ENCODE measurements at regions of chr12 and their contacts with region 1.

Region 1: GRCh38 chr12:53451661-53452158 is at the start of gene PCBP2:
- DNase-seq: peak; percentile 97
- H3K4me3 Mint-ChIP-seq: peak within 1 kb of the TSS; percentile 97
- H3K27ac Mint-ChIP-seq: peak within 1 kb of the TSS; percentile 99
- H3K4me1 Mint-ChIP-seq: peaks cover 29% of the 10 kb centered on the region
- H3K27me3 Mint-ChIP-seq: no peaks in the 10 kb centered on the region
- total RNA-seq, gene PCBP2: 865 and 896 TPM in 2 replicates

Region 2: GRCh38 chr12:53047221-53048042 is 404.3 kb before region 1 on chr12:
- intact Hi-C with region 1: loop called (anchors 10 kb)
- DNase-seq: peak; percentile 68
- H3K4me3 Mint-ChIP-seq: peak overlapping the region; percentile 47
- H3K27ac Mint-ChIP-seq: peak overlapping the region; percentile 29
- H3K4me1 Mint-ChIP-seq: peaks cover 34% of the 10 kb centered on the region
- H3K27me3 Mint-ChIP-seq: peaks cover 9% of the 10 kb centered on the region

Region 3: GRCh38 chr12:53295070-53295890 is 156.4 kb before region 1 on chr12 and contains the start of gene PFDN5:
- intact Hi-C with region 1: loop called (anchors 1 kb)
- DNase-seq: peak; percentile 86
- H3K4me3 Mint-ChIP-seq: peak within 1 kb of the TSS; percentile 99
- H3K27ac Mint-ChIP-seq: peak within 1 kb of the TSS; percentile 91
- H3K4me1 Mint-ChIP-seq: peaks cover 50% of the 10 kb centered on the region
- H3K27me3 Mint-ChIP-seq: no peaks in the 10 kb centered on the region
- total RNA-seq, gene PFDN5: 344 and 350 TPM in 2 replicates

Region 4: DNA sequence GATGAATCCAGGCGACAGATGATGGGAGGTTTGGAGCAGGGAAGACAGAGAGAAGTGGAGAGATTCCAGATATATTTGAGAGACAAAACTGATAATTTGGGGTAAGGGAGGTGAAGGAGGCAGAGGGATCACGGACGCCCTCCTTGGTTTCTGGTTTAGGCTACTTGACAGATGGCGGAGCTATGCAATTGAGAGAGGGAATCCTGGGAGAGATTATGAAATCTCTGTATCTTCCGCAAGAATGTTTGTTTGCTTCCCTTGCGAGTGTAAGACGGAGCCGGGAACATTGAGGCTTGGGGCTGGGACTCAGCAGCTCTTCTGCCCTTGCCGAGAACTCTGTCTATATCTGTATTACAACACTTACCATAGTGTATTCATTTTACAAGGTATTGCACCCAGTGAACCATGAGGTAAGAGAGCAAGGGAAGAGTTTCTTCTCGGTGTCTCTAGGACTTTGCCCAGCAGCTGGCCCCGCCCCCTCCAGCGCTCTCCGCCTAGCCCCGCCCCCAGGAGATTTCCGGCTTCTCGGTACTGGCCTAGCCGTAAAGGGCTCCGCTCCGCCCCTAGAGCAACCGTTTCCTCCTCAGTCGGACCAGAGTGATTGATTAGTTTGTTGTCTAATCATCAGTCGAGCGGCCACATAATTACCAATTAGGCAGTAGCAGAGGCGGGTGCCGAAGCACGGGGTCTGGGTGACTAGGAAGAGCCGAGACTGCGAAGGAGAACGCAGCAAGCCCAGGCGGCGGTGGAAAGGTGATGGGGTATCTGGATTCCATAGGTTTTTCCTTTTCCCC is 10.5 kb before region 1 on chr12 and contains the start of gene PRR13:
- intact Hi-C with region 1: loop called (anchors 1 kb)
- DNase-seq: peak; percentile 96
- H3K4me3 Mint-ChIP-seq: peak within 1 kb of the TSS; percentile 89
- H3K27ac Mint-ChIP-seq: peak within 1 kb of the TSS; percentile 86
- H3K4me1 Mint-ChIP-seq: peaks cover 35% of the 10 kb centered on the region
- H3K27me3 Mint-ChIP-seq: no peaks in the 10 kb centered on the region
- total RNA-seq, gene PRR13: 206 and 219 TPM in 2 replicates

Region 5: DNA sequence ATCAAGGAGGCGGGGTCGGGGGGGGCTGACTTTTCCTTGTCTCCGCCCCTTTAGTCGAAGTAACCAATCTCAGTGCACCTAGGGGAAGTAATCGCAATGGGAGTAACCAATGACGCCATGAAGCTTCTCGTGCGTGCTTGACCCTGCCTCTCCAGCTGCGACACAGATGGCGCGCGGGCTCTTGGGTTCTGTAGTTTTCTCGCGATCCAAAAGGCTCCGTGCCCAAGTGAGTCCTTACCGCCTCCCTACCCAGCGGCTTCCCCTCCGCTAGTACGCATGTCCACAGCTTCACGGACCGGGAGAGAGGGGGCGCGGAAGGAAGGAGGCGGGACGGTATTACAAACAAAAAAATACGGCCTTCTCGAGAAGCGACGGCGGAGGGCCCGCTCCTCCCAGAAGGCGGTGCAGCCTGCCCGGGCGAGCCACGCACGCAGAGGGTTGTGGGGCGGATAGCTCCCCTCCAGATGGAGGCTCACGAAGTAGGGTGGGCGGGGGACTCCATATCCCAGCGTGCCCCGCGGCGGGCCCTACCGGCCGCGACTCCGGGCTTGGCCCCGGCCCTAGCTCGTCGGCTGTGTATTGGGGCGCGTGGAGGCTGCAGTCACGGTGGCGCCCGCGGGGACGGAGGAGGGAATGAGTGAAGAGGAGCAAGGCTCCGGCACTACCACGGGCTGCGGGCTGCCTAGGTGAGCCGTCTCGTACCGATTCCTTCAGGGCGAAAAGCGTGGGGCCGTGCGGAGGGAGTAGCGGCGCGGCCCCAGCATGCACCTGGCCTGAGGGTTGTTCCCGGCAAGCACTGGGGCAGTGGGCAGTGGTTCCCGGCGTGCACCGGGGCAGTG is 49.3 kb after region 1 on chr12 and contains the start of gene TARBP2:
- intact Hi-C with region 1: loop called (anchors 1 kb)
- DNase-seq: peak; percentile 93
- H3K4me3 Mint-ChIP-seq: peak within 1 kb of the TSS; percentile 95
- H3K27ac Mint-ChIP-seq: peak within 1 kb of the TSS; percentile 98
- H3K4me1 Mint-ChIP-seq: peaks cover 53% of the 10 kb centered on the region
- H3K27me3 Mint-ChIP-seq: peaks cover 2% of the 10 kb centered on the region
- total RNA-seq, gene TARBP2: 47.7 and 48.2 TPM in 2 replicates

Region 6: GRCh38 chr12:53675651-53676453 is 224.1 kb after region 1 on chr12 and contains the start of gene ATP5MC2:
- intact Hi-C with region 1: loop called (anchors 2 kb)
- DNase-seq: peak; percentile 95
- H3K4me3 Mint-ChIP-seq: peak within 1 kb of the TSS; percentile 87
- H3K27ac Mint-ChIP-seq: peak within 1 kb of the TSS; percentile 95
- H3K4me1 Mint-ChIP-seq: peaks cover 22% of the 10 kb centered on the region
- H3K27me3 Mint-ChIP-seq: peaks cover 27% of the 10 kb centered on the region
- total RNA-seq, gene ATP5MC2: 363 and 383 TPM in 2 replicates

Measured in activated T-helper 1 cell treated with anti-CD3 and anti-CD28 coated beads, Interleukin-12 subunit alpha, Interleukin-12 subunit beta, Interleukin-2, Interleukin-4 antibody, amounts not matched to agents 30 ng/mL and 10 ng/mL and 1 ng/mL, durations not matched to agents 14 hours and 24 hours and 36 hours (primary cell).